B cell (primary cell): ENCODE measurements at regions of chr1 and their contacts with region 1.

Region 1: DNA sequence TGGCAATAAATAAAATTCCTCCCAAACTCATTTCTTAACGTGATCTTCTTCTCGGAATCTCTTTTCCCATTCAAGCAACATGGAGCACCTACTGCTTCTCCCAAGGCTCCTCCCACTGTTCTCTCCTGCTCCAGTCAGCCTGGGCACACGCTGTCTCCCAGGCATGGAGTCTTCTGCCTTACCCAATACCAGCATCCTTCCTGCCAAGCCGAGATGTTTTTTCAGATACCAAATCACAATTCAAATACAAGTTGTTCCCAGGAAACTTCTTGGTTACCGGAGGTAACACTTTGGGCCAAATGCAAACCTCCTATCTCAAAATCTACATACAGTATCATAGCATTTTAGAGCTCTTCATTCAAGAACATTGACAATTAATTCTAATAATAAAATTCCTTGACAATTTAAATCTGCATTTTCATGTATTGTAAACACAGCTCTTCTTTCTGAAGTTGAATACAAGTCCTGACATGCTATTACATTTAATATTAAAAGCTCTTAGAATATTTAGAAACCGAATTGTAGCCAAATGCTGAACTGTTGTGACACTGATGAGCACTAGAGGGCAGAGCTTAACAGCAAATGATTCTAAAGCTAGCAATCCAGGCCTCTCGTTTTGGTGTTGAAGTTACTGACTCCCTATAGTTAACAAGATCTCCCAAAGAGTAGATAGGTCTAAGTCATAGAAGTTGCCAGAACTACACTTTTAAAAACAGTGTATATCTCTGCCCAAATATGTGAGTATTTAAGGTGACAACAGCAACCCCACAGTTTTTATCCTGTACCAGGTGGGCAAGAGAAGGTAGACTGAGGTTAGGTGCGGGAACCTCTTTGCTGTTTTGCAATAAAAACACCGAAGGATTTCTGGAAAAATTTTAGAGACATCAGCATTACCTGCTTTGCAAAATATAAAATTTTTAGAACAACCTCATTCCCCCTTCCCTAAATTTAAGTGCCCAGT is 52.3 kb downstream of the BCAR3 start:
- DNase-seq: peak; percentile 80
- ATAC-seq: peak; percentile 89
- H3K4me3 ChIP-seq: no peak overlapping the region
- H3K4me3 Mint-ChIP-seq: no peak overlapping the region
- H3K27ac ChIP-seq: no peak overlapping the region
- H3K27ac Mint-ChIP-seq: no peak overlapping the region
- H3K4me1 ChIP-seq: no peaks in the 10 kb centered on the region
- H3K4me1 Mint-ChIP-seq: peaks cover 4% of the 10 kb centered on the region
- H3K27me3 ChIP-seq: no peaks in the 10 kb centered on the region
- H3K27me3 Mint-ChIP-seq: no peaks in the 10 kb centered on the region
- CTCF ChIP-seq: peak; percentile 94

Region 2: GRCh38 chr1:93164816-93165215 is 464.6 kb before region 1 on chr1:
- CTCF ChIA-PET with region 1: no interaction called
- POLR2A ChIA-PET with region 1: no interaction called
- intact Hi-C with region 1: no loop called
- DNase-seq: no peak
- ATAC-seq: no peak
- H3K4me3 ChIP-seq: no peak overlapping the region
- H3K4me3 Mint-ChIP-seq: no peak overlapping the region
- H3K27ac ChIP-seq: peak overlapping the region in 1 of 2 donors; percentile 52
- H3K27ac Mint-ChIP-seq: no peak overlapping the region
- H3K4me1 ChIP-seq: peaks cover 0 to 3% of the 10 kb centered on the region in 2 donors
- H3K4me1 Mint-ChIP-seq: peaks cover 35% of the 10 kb centered on the region
- H3K27me3 ChIP-seq: no peaks in the 10 kb centered on the region
- H3K27me3 Mint-ChIP-seq: no peaks in the 10 kb centered on the region
- CTCF ChIP-seq: no peak

Region 3: GRCh38 chr1:93349231-93350135 is 279.9 kb before region 1 on chr1:
- CTCF ChIA-PET with region 1: no interaction called
- POLR2A ChIA-PET with region 1: no interaction called
- intact Hi-C with region 1: no loop called
- DNase-seq: no peak
- ATAC-seq: no peak
- H3K4me3 ChIP-seq: peak overlapping the region in 1 of 5 experiments; percentile 78
- H3K4me3 Mint-ChIP-seq: peak overlapping the region; percentile 95
- H3K27ac ChIP-seq: no peak overlapping the region
- H3K27ac Mint-ChIP-seq: no peak overlapping the region
- H3K4me1 ChIP-seq: peaks cover 16 to 40% of the 10 kb centered on the region in 2 donors
- H3K4me1 Mint-ChIP-seq: peaks cover 53% of the 10 kb centered on the region
- H3K27me3 ChIP-seq: no peaks in the 10 kb centered on the region
- H3K27me3 Mint-ChIP-seq: no peaks in the 10 kb centered on the region
- CTCF ChIP-seq: no peak

Region 4: DNA sequence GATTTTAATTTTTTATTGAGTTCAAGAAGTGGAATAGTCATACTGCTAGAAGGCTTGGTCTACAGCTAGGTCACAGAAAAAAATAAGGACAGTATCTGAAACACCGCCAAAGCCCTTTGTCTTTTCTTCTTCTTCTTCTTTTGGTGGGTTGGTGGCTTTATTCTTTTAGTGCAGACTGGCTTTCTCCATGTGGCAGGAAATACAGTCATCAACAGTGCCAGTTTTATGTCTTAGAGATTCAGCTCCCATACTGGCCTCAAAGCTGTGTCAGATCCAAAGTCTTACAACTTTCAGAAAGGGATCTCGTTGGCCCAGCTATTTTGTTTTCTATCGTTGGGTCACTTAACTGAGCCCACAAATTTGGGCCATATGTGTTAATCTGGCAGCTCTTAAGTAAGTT is 123.3 kb before region 1 on chr1:
- CTCF ChIA-PET with region 1: no interaction called
- POLR2A ChIA-PET with region 1: no interaction called
- intact Hi-C with region 1: no loop called
- DNase-seq: no peak
- ATAC-seq: no peak
- H3K4me3 ChIP-seq: no peak overlapping the region
- H3K4me3 Mint-ChIP-seq: no peak overlapping the region
- H3K27ac ChIP-seq: no peak overlapping the region
- H3K27ac Mint-ChIP-seq: no peak overlapping the region
- H3K4me1 ChIP-seq: no peaks in the 10 kb centered on the region
- H3K4me1 Mint-ChIP-seq: no peaks in the 10 kb centered on the region
- H3K27me3 ChIP-seq: no peaks in the 10 kb centered on the region
- H3K27me3 Mint-ChIP-seq: no peaks in the 10 kb centered on the region
- CTCF ChIP-seq: no peak

Region 5: DNA sequence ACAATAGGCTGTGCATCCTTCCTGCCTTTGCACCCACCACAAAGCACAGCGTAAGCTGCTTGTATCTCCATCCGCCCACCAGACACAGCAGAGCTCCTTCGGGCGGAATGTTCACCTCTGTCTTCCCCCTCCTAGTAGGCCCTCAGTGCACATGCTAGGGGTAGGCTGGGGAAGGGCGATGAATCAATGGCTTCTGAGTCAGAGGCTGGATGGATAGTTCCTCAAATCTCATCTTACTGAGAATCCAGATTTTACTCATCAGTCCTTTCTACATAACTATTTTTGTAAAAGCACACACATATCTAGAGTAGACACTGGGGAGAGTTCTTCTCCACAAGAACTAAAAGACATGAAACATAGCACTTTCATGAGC is 21.6 kb before region 1 on chr1:
- CTCF ChIA-PET with region 1: interaction called, 15 read pairs
- POLR2A ChIA-PET with region 1: no interaction called
- intact Hi-C with region 1: no loop called
- DNase-seq: no peak
- ATAC-seq: peak; percentile 75
- H3K4me3 ChIP-seq: no peak overlapping the region
- H3K4me3 Mint-ChIP-seq: peak overlapping the region; percentile 23
- H3K27ac ChIP-seq: no peak overlapping the region
- H3K27ac Mint-ChIP-seq: peak overlapping the region; percentile 66
- H3K4me1 ChIP-seq: peaks cover 0 to 28% of the 10 kb centered on the region in 2 donors
- H3K4me1 Mint-ChIP-seq: peaks cover 55% of the 10 kb centered on the region
- H3K27me3 ChIP-seq: no peaks in the 10 kb centered on the region
- H3K27me3 Mint-ChIP-seq: no peaks in the 10 kb centered on the region
- CTCF ChIP-seq: no peak

Region 6: GRCh38 chr1:93672069-93672468 is 42.7 kb after region 1 on chr1:
- CTCF ChIA-PET with region 1: interaction called, 11 read pairs
- POLR2A ChIA-PET with region 1: no interaction called
- intact Hi-C with region 1: no loop called
- DNase-seq: no peak
- ATAC-seq: no peak
- H3K4me3 ChIP-seq: no peak overlapping the region
- H3K4me3 Mint-ChIP-seq: no peak overlapping the region
- H3K27ac ChIP-seq: no peak overlapping the region
- H3K27ac Mint-ChIP-seq: no peak overlapping the region
- H3K4me1 ChIP-seq: no peaks in the 10 kb centered on the region
- H3K4me1 Mint-ChIP-seq: peaks cover 21% of the 10 kb centered on the region
- H3K27me3 ChIP-seq: no peaks in the 10 kb centered on the region
- H3K27me3 Mint-ChIP-seq: no peaks in the 10 kb centered on the region
- CTCF ChIP-seq: no peak

Region 7: DNA sequence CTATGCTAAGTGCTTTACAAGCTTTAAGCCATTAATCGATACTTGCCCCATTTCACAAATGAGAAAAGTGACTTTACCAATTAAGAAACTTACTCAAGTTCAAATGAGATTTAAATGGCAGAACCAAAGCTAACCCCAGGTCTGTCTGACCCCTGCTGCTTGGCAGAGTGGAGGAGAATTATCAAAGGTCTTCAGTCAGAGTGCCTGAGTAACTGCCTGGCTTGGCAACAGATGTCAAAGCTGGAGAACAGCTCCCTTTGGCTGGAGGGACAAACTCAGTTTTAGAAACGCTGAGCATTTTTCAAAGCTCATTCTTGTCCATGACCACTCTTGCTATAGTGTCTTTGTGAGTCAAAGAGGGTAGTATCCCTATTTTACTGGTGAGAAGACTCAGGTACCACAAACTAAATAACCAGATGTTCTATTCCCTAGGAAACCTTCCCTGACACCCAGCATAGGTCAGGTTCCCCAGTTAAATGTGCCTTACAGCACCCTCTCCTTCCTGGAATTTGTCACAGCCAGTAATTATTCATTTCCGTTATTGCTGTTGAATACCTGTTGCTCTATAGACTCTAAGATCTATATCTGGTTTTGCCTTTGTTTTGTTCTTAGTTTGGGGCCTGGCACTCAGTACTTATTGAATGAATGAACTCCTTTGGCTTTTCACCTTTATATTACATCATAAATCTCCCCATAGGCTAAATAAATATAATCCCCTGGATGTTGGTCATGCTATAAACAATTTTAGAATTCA is 57.3 kb after region 1 on chr1:
- CTCF ChIA-PET with region 1: interaction called, 14 read pairs
- POLR2A ChIA-PET with region 1: no interaction called
- intact Hi-C with region 1: no loop called
- DNase-seq: no peak
- ATAC-seq: no peak
- H3K4me3 ChIP-seq: no peak overlapping the region
- H3K4me3 Mint-ChIP-seq: peak overlapping the region; percentile 6
- H3K27ac ChIP-seq: no peak overlapping the region
- H3K27ac Mint-ChIP-seq: no peak overlapping the region
- H3K4me1 ChIP-seq: peaks cover 36 to 59% of the 10 kb centered on the region in 2 donors
- H3K4me1 Mint-ChIP-seq: peaks cover 64% of the 10 kb centered on the region
- H3K27me3 ChIP-seq: no peaks in the 10 kb centered on the region
- H3K27me3 Mint-ChIP-seq: no peaks in the 10 kb centered on the region
- CTCF ChIP-seq: no peak

Region 8: DNA sequence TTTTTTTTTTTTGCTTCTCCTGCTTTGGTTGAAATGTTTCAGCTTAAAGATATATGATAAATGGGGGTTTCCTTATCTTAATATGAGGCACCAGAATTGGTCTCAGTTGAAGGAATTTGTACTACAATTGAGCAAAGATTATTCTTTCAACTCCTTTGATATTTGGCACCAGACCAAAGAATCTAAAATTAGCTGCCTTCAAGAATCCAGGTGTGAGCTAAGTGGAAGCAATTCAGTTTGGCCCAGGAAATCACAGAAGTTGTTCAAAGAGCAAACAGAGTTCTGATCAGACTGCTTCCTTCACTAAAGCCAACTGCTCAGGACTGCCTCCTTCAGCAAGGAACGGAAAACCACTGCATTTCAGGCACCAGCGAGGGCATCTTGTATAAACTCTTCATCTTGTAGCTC is 120.5 kb after region 1 on chr1:
- CTCF ChIA-PET with region 1: interaction called, 54 read pairs
- POLR2A ChIA-PET with region 1: no interaction called
- intact Hi-C with region 1: no loop called
- DNase-seq: peak; percentile 82
- ATAC-seq: peak; percentile 48
- H3K4me3 ChIP-seq: peak overlapping the region in 2 of 5 experiments; percentile 5 to 40
- H3K4me3 Mint-ChIP-seq: peak overlapping the region; percentile 73
- H3K27ac ChIP-seq: peak overlapping the region; percentile 86 to 87
- H3K27ac Mint-ChIP-seq: peak overlapping the region; percentile 93
- H3K4me1 ChIP-seq: peaks cover 34 to 41% of the 10 kb centered on the region in 2 donors
- H3K4me1 Mint-ChIP-seq: peaks cover 55% of the 10 kb centered on the region
- H3K27me3 ChIP-seq: no peaks in the 10 kb centered on the region
- H3K27me3 Mint-ChIP-seq: no peaks in the 10 kb centered on the region
- CTCF ChIP-seq: peak; percentile 56

Region 9: DNA sequence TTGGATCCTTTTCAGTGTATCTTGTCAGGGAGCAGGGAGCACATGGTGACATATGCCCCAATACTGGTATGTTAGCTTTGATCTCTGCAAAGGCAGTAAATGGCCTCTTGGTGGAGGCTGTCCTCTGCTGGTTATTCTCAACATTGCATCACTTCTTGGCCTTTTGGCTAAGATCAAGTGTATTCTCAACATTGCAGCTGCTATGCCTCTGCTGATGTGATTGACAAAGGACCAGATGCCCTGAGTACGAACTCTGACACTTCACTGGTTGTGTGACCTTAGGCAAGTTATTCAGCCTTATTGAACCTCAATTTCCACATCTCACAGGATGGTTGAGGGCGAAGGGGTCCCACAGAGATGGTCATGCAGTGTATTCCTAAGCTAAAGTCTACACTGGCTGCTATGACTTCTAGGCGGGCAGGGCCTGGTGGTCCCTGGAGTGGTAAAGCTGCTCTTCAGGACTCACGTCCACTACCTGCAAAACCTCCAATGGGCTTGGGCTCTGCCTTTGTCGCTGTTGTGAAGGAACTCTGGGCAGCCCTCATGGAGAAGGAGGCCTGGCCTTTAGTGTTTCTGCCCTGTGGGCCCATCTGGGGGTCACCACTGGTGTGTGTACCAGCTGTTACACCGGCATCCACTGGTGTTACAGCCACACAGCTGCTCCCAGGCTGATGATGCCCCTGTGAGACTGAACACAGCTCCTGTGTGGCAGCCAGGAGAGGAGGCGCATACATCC is 184.8 kb after region 1 on chr1:
- CTCF ChIA-PET with region 1: interaction called, 858 read pairs
- POLR2A ChIA-PET with region 1: no interaction called
- intact Hi-C with region 1: loop called (anchors 1 kb)
- DNase-seq: peak; percentile 80
- ATAC-seq: peak; percentile 91
- H3K4me3 ChIP-seq: no peak overlapping the region
- H3K4me3 Mint-ChIP-seq: no peak overlapping the region
- H3K27ac ChIP-seq: no peak overlapping the region
- H3K27ac Mint-ChIP-seq: no peak overlapping the region
- H3K4me1 ChIP-seq: peaks cover 14 to 22% of the 10 kb centered on the region in 2 donors
- H3K4me1 Mint-ChIP-seq: peaks cover 17% of the 10 kb centered on the region
- H3K27me3 ChIP-seq: no peaks in the 10 kb centered on the region
- H3K27me3 Mint-ChIP-seq: no peaks in the 10 kb centered on the region
- CTCF ChIP-seq: peak; percentile 97

Region 10: GRCh38 chr1:93909146-93910050 is 280.0 kb after region 1 on chr1 and contains the start of gene GCLM:
- CTCF ChIA-PET with region 1: interaction called, 3 read pairs
- POLR2A ChIA-PET with region 1: no interaction called
- intact Hi-C with region 1: loop called (anchors 1 kb)
- DNase-seq: peak; percentile 94
- ATAC-seq: peak; percentile 93
- H3K4me3 ChIP-seq: peak within 1 kb of the TSS; percentile 60 to 98 (median 71)
- H3K4me3 Mint-ChIP-seq: peak within 1 kb of the TSS; percentile 89
- H3K27ac ChIP-seq: peak within 1 kb of the TSS; percentile 67 to 81
- H3K27ac Mint-ChIP-seq: peak within 1 kb of the TSS; percentile 84
- H3K4me1 ChIP-seq: peaks cover 17 to 21% of the 10 kb centered on the region in 2 donors
- H3K4me1 Mint-ChIP-seq: peaks cover 25% of the 10 kb centered on the region
- H3K27me3 ChIP-seq: no peaks in the 10 kb centered on the region
- H3K27me3 Mint-ChIP-seq: peaks cover 6% of the 10 kb centered on the region
- CTCF ChIP-seq: peak; percentile 94
- total RNA-seq, gene GCLM: 10.7 and 12.4 TPM in 2 replicates